CD4-positive, alpha-beta T cell (primary cell): ENCODE measurements at regions of chr7 and their contacts with region 1.

Region 1: DNA sequence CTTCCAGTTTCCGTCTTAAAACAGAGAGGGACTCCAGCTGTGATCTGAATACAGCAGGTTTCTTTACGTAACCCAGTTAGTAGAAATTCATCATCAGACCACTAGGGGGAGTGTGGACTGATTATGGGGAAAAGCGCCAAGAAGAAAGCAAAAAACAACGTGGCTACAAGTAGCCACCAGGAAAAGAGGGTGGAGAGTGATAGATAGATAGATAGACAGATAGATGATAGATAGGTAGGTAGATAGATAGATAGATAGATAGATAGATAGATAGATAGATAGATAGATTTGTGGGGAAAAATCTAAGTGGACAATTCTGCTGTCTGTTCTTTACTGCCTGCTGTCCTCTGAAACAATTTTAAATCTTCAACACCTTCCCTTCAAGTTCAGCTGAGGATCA is 12.7 kb upstream of the AKR1B10 start:
- DNase-seq: peak in 5 of 14 experiments; percentile 7 to 78 (median 65)
- ATAC-seq: peak; percentile 63
- H3K4me3 ChIP-seq: no peak overlapping the region
- H3K4me3 Mint-ChIP-seq: no peak overlapping the region
- H3K27ac ChIP-seq: no peak overlapping the region
- H3K27ac Mint-ChIP-seq: no peak overlapping the region
- H3K4me1 ChIP-seq: no peaks in the 10 kb centered on the region
- H3K4me1 Mint-ChIP-seq: no peaks in the 10 kb centered on the region
- H3K27me3 ChIP-seq: peaks cover 6 to 12% of the 10 kb centered on the region in 2 experiments
- H3K27me3 Mint-ChIP-seq: peaks cover 28% of the 10 kb centered on the region
- CTCF ChIP-seq: peak; percentile 95

Region 2: GRCh38 chr7:134605973-134606923 is 91.6 kb after region 1 on chr7:
- CTCF ChIA-PET with region 1: no interaction called
- POLR2A ChIA-PET with region 1: no interaction called
- intact Hi-C with region 1: loop called (anchors 2 kb)
- DNase-seq: peak; percentile 35 to 79 (median 48)
- ATAC-seq: peak; percentile 86
- H3K4me3 ChIP-seq: no peak overlapping the region
- H3K4me3 Mint-ChIP-seq: no peak overlapping the region
- H3K27ac ChIP-seq: no peak overlapping the region
- H3K27ac Mint-ChIP-seq: no peak overlapping the region
- H3K4me1 ChIP-seq: no peaks in the 10 kb centered on the region
- H3K4me1 Mint-ChIP-seq: peaks cover 5% of the 10 kb centered on the region
- H3K27me3 ChIP-seq: peaks cover 0 to 12% of the 10 kb centered on the region in 2 experiments
- H3K27me3 Mint-ChIP-seq: peaks cover 62% of the 10 kb centered on the region
- CTCF ChIP-seq: peak; percentile 92